CD8-positive, alpha-beta T cell (primary cell): ENCODE measurements at regions of chr1 and their contacts with region 1.

Region 1: DNA sequence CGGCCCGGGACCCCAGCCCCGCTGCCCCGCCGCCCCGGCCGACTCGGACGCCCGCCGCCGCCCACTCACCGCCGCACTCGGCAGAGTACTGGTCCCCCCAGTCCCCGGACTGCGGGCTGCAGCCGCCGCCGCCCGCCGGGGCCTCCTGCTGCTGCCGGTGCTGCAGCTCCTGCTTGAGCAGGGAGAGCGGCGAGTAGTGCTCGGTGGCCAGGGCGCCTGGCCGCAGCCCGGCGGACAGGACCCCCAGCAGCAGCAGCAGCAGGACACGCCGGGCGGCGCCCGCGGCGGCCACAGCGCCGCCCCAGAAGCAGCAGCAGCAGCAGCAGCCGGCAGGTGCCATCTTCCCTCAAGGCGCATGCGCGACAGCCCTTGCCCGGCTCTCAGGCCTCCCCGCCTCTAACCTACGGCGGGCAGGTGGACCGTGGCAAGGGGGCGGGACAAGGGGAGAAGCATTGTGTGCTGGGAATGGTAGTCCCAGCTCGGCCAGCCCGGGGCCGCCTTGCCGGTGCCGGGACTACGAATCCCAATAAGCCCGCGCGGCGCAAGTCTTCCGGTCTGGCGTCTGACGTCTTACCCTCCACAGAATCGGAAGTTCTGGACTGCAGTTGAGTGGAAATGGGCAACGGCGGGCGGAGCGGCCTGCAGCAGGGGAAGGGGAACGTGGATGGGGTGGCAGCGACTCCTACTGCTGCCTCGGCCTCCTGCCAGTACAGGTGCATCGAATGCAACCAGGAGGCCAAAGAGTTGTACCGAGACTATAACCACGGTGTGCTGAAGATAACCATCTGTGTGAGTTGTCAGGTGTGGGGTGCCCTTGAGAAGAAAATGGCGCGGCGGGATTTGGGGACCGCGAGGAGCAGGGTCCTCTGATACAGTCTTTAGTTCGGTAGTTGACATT is at the starts of genes ARV1 and TTC13:
- DNase-seq: peak; percentile 91 to 98 (median 96)
- ATAC-seq: peak; percentile 89
- H3K4me3 ChIP-seq: peak within 1 kb of the TSS; percentile 78 to 91
- H3K4me3 Mint-ChIP-seq: peak within 1 kb of the TSS; percentile 100
- H3K27ac ChIP-seq: peak within 1 kb of the TSS; percentile 74 to 88
- H3K27ac Mint-ChIP-seq: peak within 1 kb of the TSS; percentile 98
- H3K4me1 ChIP-seq: peaks cover 38% of the 10 kb centered on the region
- H3K4me1 Mint-ChIP-seq: peaks cover 34% of the 10 kb centered on the region
- H3K27me3 ChIP-seq: no peaks in the 10 kb centered on the region
- H3K27me3 Mint-ChIP-seq: no peaks in the 10 kb centered on the region
- CTCF ChIP-seq: peak; percentile 51
- total RNA-seq, gene ARV1: 1.4 to 1.5 TPM
- total RNA-seq, gene TTC13: 15.2 to 19.3 TPM

Region 2: DNA sequence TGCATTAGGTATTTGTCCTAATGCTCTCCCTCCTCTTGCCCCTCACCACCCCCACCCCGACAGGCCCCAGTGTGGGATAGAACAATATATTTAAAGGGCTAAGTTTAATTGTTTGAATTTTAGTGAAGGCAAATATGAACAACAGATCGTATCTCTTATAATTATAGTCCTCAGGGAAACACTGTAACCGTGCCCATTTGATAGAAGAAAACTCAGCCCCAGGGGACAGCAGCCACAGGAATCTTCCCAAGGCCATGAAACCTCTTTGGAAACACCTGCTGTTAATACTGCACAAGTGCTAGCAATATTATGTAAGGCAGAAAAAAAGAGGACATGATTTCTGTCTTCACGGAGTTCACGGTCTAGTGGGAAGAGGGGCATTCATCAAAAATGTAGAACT is 1210.5 kb before region 1 on chr1:
- CTCF ChIA-PET with region 1: no interaction called
- POLR2A ChIA-PET with region 1: no interaction called
- intact Hi-C with region 1: no loop called
- DNase-seq: no peak
- ATAC-seq: no peak
- H3K4me3 ChIP-seq: no peak overlapping the region
- H3K4me3 Mint-ChIP-seq: no peak overlapping the region
- H3K27ac ChIP-seq: no peak overlapping the region
- H3K27ac Mint-ChIP-seq: no peak overlapping the region
- H3K4me1 ChIP-seq: no peaks in the 10 kb centered on the region
- H3K4me1 Mint-ChIP-seq: no peaks in the 10 kb centered on the region
- H3K27me3 ChIP-seq: peaks cover 2% of the 10 kb centered on the region in 2 experiments
- H3K27me3 Mint-ChIP-seq: peaks cover 18% of the 10 kb centered on the region
- CTCF ChIP-seq: no peak

Region 3: GRCh38 chr1:230681599-230681998 is 297.1 kb before region 1 on chr1:
- CTCF ChIA-PET with region 1: no interaction called
- POLR2A ChIA-PET with region 1: no interaction called
- intact Hi-C with region 1: no loop called
- DNase-seq: no peak
- ATAC-seq: no peak
- H3K4me3 ChIP-seq: no peak overlapping the region
- H3K4me3 Mint-ChIP-seq: no peak overlapping the region
- H3K27ac ChIP-seq: peak overlapping the region in 1 of 2 experiments; percentile 22
- H3K27ac Mint-ChIP-seq: no peak overlapping the region
- H3K4me1 ChIP-seq: no peaks in the 10 kb centered on the region
- H3K4me1 Mint-ChIP-seq: no peaks in the 10 kb centered on the region
- H3K27me3 ChIP-seq: no peaks in the 10 kb centered on the region
- H3K27me3 Mint-ChIP-seq: no peaks in the 10 kb centered on the region
- CTCF ChIP-seq: no peak

Region 4: GRCh38 chr1:230797942-230798418 is 180.8 kb before region 1 on chr1:
- CTCF ChIA-PET with region 1: no interaction called
- POLR2A ChIA-PET with region 1: no interaction called
- intact Hi-C with region 1: loop called in 1 of 2 experiments (anchors 5 kb)
- DNase-seq: peak in 2 of 9 experiments; percentile 11 to 21
- ATAC-seq: no peak
- H3K4me3 ChIP-seq: no peak overlapping the region
- H3K4me3 Mint-ChIP-seq: no peak overlapping the region
- H3K27ac ChIP-seq: no peak overlapping the region
- H3K27ac Mint-ChIP-seq: no peak overlapping the region
- H3K4me1 ChIP-seq: no peaks in the 10 kb centered on the region
- H3K4me1 Mint-ChIP-seq: no peaks in the 10 kb centered on the region
- H3K27me3 ChIP-seq: no peaks in the 10 kb centered on the region
- H3K27me3 Mint-ChIP-seq: peaks cover 27% of the 10 kb centered on the region
- CTCF ChIP-seq: no peak

Region 5: GRCh38 chr1:230917284-230918135 is 61.2 kb before region 1 on chr1:
- CTCF ChIA-PET with region 1: interaction called, 10 read pairs
- POLR2A ChIA-PET with region 1: interaction called, 3 read pairs
- intact Hi-C with region 1: loop called (anchors 1 kb)
- DNase-seq: peak; percentile 41 to 86 (median 80)
- ATAC-seq: peak; percentile 65
- H3K4me3 ChIP-seq: no peak overlapping the region
- H3K4me3 Mint-ChIP-seq: no peak overlapping the region
- H3K27ac ChIP-seq: no peak overlapping the region
- H3K27ac Mint-ChIP-seq: no peak overlapping the region
- H3K4me1 ChIP-seq: no peaks in the 10 kb centered on the region
- H3K4me1 Mint-ChIP-seq: no peaks in the 10 kb centered on the region
- H3K27me3 ChIP-seq: no peaks in the 10 kb centered on the region
- H3K27me3 Mint-ChIP-seq: no peaks in the 10 kb centered on the region
- CTCF ChIP-seq: peak; percentile 84

Region 6: DNA sequence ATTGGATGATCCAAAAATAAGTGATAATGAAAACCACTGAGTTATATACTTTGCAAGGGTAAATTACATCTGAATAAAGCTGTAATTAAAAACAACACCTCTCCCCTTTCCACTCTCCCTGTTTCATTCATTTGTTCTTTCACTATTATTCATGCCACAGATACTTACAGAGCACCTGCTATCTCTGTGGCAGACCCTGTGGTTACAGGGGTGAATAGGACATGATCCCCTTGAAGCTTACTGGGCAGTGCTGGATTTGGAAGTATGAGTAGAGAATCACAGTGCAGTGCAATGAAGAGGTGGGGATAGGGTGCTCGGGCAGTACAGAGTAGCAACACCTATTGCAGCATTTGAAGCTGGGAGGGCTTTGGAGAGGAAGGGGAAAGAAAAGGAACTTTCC is 21.9 kb after region 1 on chr1:
- CTCF ChIA-PET with region 1: no interaction called
- POLR2A ChIA-PET with region 1: no interaction called
- intact Hi-C with region 1: no loop called
- DNase-seq: no peak
- ATAC-seq: no peak
- H3K4me3 ChIP-seq: no peak overlapping the region
- H3K4me3 Mint-ChIP-seq: no peak overlapping the region
- H3K27ac ChIP-seq: no peak overlapping the region
- H3K27ac Mint-ChIP-seq: no peak overlapping the region
- H3K4me1 ChIP-seq: no peaks in the 10 kb centered on the region
- H3K4me1 Mint-ChIP-seq: no peaks in the 10 kb centered on the region
- H3K27me3 ChIP-seq: no peaks in the 10 kb centered on the region
- H3K27me3 Mint-ChIP-seq: no peaks in the 10 kb centered on the region
- CTCF ChIP-seq: no peak

Region 7: GRCh38 chr1:231211005-231211857 is 232.5 kb after region 1 on chr1:
- CTCF ChIA-PET with region 1: interaction called, 3 read pairs
- POLR2A ChIA-PET with region 1: no interaction called
- intact Hi-C with region 1: loop called in 1 of 2 experiments (anchors 5 kb)
- DNase-seq: peak; percentile 76 to 96 (median 90)
- ATAC-seq: peak; percentile 96
- H3K4me3 ChIP-seq: peak overlapping the region; percentile 42 to 52
- H3K4me3 Mint-ChIP-seq: peak overlapping the region; percentile 83
- H3K27ac ChIP-seq: no peak overlapping the region
- H3K27ac Mint-ChIP-seq: peak overlapping the region; percentile 73
- H3K4me1 ChIP-seq: peaks cover 19% of the 10 kb centered on the region
- H3K4me1 Mint-ChIP-seq: peaks cover 28% of the 10 kb centered on the region
- H3K27me3 ChIP-seq: no peaks in the 10 kb centered on the region
- H3K27me3 Mint-ChIP-seq: no peaks in the 10 kb centered on the region
- CTCF ChIP-seq: peak; percentile 93

Region 8: DNA sequence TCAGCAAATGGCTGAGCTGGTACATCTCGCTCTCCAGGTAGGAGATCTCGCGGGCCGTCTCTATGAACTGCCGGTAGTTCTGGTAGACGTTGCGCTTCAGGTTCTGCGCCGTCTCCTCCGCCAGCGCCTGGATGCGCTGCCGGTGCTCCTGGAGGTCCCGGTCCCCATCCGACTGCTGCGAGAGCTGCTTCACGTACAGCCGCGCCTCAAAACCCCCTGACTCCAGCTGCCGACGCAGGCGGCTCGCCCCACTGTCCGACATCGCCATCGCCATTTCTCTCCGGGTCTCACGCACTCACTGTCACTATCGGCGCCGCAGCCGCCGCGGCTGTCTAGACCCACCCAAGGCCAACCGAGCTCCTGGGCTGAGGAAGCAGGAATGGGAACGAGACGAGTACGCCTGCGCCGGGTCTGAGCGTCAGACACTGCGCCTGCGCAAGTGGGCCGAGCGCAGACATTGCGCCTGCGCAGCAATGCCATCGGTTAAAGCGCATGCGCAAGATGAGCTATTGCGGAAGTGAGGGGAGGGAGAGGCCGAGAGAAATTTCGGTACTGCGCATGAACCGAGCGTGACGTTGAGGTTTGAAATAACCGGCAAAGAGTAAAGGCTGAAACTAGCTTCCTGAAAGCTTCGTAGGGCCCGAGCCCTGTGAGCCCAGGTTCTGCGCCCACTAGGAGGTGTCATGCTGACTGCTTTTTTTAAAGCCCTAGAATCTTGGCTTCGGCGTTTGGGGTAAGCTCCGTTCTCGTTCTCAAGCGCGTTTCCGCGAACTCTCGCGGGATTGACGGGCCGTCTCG is 358.9 kb after region 1 on chr1 and contains the start of gene EXOC8:
- CTCF ChIA-PET with region 1: no interaction called
- POLR2A ChIA-PET with region 1: no interaction called
- intact Hi-C with region 1: loop called (anchors 5 kb)
- DNase-seq: peak; percentile 95 to 99 (median 98)
- ATAC-seq: peak; percentile 83
- H3K4me3 ChIP-seq: peak within 1 kb of the TSS; percentile 95 to 98
- H3K4me3 Mint-ChIP-seq: peak within 1 kb of the TSS; percentile 97
- H3K27ac ChIP-seq: peak within 1 kb of the TSS; percentile 97 to 98
- H3K27ac Mint-ChIP-seq: peak within 1 kb of the TSS; percentile 99
- H3K4me1 ChIP-seq: peaks cover 55% of the 10 kb centered on the region
- H3K4me1 Mint-ChIP-seq: peaks cover 64% of the 10 kb centered on the region
- H3K27me3 ChIP-seq: no peaks in the 10 kb centered on the region
- H3K27me3 Mint-ChIP-seq: no peaks in the 10 kb centered on the region
- CTCF ChIP-seq: no peak
- total RNA-seq, gene EXOC8: 28.8 to 28.9 TPM

Region 9: DNA sequence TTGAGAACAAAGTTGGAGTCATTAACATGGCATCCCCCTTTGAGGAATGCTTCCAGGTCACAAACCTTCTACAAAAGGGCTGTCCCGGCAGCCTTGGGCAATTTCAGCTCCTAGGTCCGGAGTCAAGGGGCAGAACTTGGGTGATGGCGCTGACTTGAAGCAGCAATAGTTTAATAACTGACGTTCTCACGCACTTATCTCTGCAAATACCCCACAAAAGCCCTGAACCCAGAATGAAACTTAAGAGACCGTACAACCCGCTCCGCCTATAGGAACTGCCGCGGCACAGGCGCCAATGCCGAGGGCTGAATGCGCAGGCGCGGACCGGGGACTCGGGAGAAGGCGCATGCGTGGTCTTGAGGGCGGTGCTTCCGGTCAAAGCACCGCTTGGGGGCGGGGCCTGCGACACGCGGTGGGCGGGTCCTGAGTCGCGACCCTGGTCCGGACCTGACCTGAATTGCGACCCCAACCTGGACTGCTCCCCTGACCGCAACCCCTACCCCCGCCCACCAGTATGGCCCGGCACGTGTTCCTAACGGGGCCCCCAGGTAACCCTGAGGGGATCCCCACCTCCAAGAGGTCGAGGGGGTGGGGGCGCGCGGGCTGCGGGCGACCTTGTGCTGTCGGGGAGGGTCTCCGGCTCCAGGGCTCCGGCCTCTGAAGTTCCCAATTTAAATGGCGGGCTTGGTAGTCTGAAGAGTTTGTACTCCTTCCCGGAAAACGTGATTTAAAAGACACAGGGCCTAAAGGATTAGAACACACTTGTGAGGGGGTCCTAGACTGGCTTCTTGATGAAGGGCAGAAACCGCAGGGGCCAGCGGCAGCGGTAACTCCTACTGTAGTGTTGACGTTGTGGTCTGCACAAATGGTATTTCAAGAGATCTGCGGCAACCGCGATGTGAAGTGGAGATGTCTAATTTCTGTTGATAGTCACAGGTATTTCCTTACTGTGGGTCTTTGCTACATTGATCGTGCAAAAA is 1971.7 kb after region 1 on chr1 and contains the start of gene NTPCR:
- CTCF ChIA-PET with region 1: no interaction called
- POLR2A ChIA-PET with region 1: no interaction called
- intact Hi-C with region 1: loop called (anchors 5 to 10 kb)
- DNase-seq: peak; percentile 87 to 98 (median 95)
- ATAC-seq: peak; percentile 83
- H3K4me3 ChIP-seq: peak within 1 kb of the TSS; percentile 83 to 90
- H3K4me3 Mint-ChIP-seq: peak within 1 kb of the TSS; percentile 96
- H3K27ac ChIP-seq: peak within 1 kb of the TSS; percentile 56 to 64
- H3K27ac Mint-ChIP-seq: peak within 1 kb of the TSS; percentile 94
- H3K4me1 ChIP-seq: peaks cover 28% of the 10 kb centered on the region
- H3K4me1 Mint-ChIP-seq: peaks cover 44% of the 10 kb centered on the region
- H3K27me3 ChIP-seq: no peaks in the 10 kb centered on the region
- H3K27me3 Mint-ChIP-seq: no peaks in the 10 kb centered on the region
- CTCF ChIP-seq: no peak
- total RNA-seq, gene NTPCR: 3.4 to 3.9 TPM